Adrenal gland (tissue), 19 donors: ENCODE measurements at regions of chr1 and their contacts with region 1.

Region 1: GRCh38 chr1:234722904-234723720 is 113.1 kb upstream of the IRF2BP2 start:
- DNase-seq: peak; percentile 77 to 92 (median 88)
- H3K4me3 ChIP-seq: peak overlapping the region in 1 of 4 donors; percentile 4
- H3K27ac ChIP-seq: peak overlapping the region; percentile 93 to 98 (median 97)
- H3K4me1 ChIP-seq: peaks cover 73 to 92% of the 10 kb centered on the region in 2 donors
- H3K27me3 ChIP-seq: no peaks in the 10 kb centered on the region
- CTCF ChIP-seq: peak in 1 of 6 experiments; percentile 11
- POLR2A ChIP-seq: peak in 1 of 2 donors; percentile 67

Region 2: DNA sequence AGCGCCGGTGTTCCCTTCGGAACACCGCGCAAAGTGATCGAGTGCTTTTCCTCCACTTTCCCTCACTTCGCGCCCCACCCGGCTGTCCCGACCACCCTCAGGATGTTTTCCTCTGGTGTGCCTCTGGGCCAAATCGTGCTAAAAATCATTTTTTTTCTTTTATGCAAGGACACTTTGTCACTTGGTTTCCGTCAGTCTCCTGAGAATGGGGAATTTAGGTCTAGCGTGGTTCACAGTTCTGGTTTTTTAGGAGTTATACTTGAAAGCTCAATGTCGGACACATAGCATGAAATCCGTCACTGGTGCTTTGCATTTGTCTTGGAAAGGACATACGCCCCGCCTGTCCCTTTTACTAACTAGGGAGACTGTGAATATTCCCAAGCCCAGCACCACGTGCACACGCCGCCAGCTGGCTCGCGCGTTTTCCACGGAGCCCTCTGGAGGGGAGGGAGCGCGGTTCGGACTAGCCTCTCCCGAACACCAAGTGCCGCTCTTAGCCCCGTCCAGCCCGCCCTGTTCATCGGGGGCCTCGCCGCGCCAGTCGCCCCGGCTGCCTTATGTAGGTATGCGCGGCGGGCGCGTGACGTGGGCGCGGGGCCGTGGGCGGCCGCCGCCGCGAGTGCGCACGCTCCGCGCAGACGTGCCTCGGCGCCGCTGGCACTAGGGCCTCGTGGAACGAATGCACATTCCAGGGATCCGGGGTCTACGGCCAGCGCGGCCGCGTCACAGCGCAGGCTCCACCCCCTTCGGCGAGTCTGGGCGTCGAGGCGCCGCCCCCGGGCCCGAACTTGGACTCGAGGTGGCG is 112.6 kb before region 1 on chr1:
- intact Hi-C with region 1: loop called (anchors 2 to 5 kb)
- DNase-seq: peak; percentile 96 to 98 (median 96)
- H3K4me3 ChIP-seq: peak overlapping the region; percentile 31 to 88 (median 55)
- H3K27ac ChIP-seq: peak overlapping the region; percentile 97 to 100 (median 100)
- H3K4me1 ChIP-seq: peaks cover 45% of the 10 kb centered on the region in 2 donors
- H3K27me3 ChIP-seq: no peaks in the 10 kb centered on the region
- CTCF ChIP-seq: peak in 3 of 6 experiments; percentile 21 to 41 (median 40)
- POLR2A ChIP-seq: peak; percentile 99

Region 3: DNA sequence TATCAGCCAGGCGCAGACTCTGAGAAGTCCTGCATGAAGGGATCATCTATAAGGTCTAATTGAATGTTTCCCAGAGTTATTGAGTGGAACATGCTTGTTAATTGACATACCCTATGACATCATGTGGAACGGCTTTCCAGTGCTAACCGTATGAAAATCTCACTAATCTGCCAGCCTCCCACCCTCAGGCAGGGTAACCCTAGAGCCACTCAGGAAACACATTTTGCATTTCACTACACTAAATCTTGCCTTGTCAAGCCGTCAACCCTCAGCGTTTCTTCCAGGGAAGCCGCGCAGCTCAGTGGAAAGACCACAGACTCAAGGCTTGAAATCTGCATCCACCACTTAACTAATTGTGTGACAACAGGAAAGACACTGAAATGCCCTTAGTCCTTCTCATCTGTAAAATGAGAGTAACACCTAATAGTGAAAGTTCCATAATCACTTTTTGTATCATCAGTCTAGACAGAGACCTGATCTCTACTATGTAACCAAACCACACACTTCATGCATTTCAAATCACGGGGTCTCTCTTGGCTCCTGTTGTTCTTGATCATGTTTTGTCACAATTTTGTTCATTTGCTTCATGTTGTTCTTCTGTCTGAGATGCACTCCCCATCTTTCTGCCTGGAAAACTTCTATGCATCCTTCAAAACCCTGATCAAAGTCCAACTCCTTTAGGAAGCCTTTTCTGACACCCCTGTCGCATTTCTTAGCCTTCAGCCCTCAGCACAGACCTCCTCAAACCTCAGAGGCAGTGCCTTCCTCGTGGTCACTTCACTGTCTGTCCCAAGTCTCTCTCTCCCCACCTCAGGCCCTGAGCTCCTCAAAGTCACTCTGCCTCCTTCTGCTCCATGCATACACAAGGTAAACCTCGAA is 159.0 kb after region 1 on chr1:
- intact Hi-C with region 1: loop called in 1 of 2 experiments (anchors 10 kb)
- DNase-seq: peak in 2 of 7 donors; percentile 1 to 9
- H3K4me3 ChIP-seq: no peak overlapping the region
- H3K27ac ChIP-seq: no peak overlapping the region
- H3K4me1 ChIP-seq: peaks cover 15 to 27% of the 10 kb centered on the region in 2 donors
- H3K27me3 ChIP-seq: no peaks in the 10 kb centered on the region
- CTCF ChIP-seq: no peak
- POLR2A ChIP-seq: no peak

Region 4: GRCh38 chr1:234978397-234979295 is 255.5 kb after region 1 on chr1:
- intact Hi-C with region 1: loop called (anchors 10 kb)
- DNase-seq: peak; percentile 73 to 91 (median 86)
- H3K4me3 ChIP-seq: peak overlapping the region in 1 of 4 donors; percentile 7
- H3K27ac ChIP-seq: peak overlapping the region; percentile 94 to 99 (median 95)
- H3K4me1 ChIP-seq: peaks cover 61 to 82% of the 10 kb centered on the region in 2 donors
- H3K27me3 ChIP-seq: no peaks in the 10 kb centered on the region
- CTCF ChIP-seq: peak in 1 of 6 experiments; percentile 21
- POLR2A ChIP-seq: peak in 1 of 2 donors; percentile 67